ENCODE measurements at regions of chr10 and their contacts with region 1.

Region 1: GRCh38 chr10:46106410-46107255 is 60.6 kb upstream of the MSMB start:
- DNase-seq: peak; percentile 89
- H3K4me3 Mint-ChIP-seq: peak overlapping the region; percentile 82
- H3K27ac Mint-ChIP-seq: peak overlapping the region; percentile 4
- H3K4me1 Mint-ChIP-seq: peaks cover 14% of the 10 kb centered on the region
- H3K27me3 Mint-ChIP-seq: peaks cover 21% of the 10 kb centered on the region

Region 2: GRCh38 chr10:46033602-46034011 is 73.0 kb before region 1 on chr10:
- intact Hi-C with region 1: no loop called
- DNase-seq: no peak
- H3K4me3 Mint-ChIP-seq: no peak overlapping the region
- H3K27ac Mint-ChIP-seq: no peak overlapping the region
- H3K4me1 Mint-ChIP-seq: peaks cover 23% of the 10 kb centered on the region
- H3K27me3 Mint-ChIP-seq: peaks cover 1% of the 10 kb centered on the region

Region 3: GRCh38 chr10:46050941-46051623 is 55.6 kb before region 1 on chr10:
- intact Hi-C with region 1: no loop called
- DNase-seq: no peak
- H3K4me3 Mint-ChIP-seq: no peak overlapping the region
- H3K27ac Mint-ChIP-seq: no peak overlapping the region
- H3K4me1 Mint-ChIP-seq: peaks cover 4% of the 10 kb centered on the region
- H3K27me3 Mint-ChIP-seq: peaks cover 7% of the 10 kb centered on the region

Region 4: GRCh38 chr10:46216836-46217751 is 110.5 kb after region 1 on chr10:
- intact Hi-C with region 1: no loop called
- DNase-seq: peak; percentile 45
- H3K4me3 Mint-ChIP-seq: no peak overlapping the region
- H3K27ac Mint-ChIP-seq: no peak overlapping the region
- H3K4me1 Mint-ChIP-seq: peaks cover 14% of the 10 kb centered on the region
- H3K27me3 Mint-ChIP-seq: no peaks in the 10 kb centered on the region

Region 5: DNA sequence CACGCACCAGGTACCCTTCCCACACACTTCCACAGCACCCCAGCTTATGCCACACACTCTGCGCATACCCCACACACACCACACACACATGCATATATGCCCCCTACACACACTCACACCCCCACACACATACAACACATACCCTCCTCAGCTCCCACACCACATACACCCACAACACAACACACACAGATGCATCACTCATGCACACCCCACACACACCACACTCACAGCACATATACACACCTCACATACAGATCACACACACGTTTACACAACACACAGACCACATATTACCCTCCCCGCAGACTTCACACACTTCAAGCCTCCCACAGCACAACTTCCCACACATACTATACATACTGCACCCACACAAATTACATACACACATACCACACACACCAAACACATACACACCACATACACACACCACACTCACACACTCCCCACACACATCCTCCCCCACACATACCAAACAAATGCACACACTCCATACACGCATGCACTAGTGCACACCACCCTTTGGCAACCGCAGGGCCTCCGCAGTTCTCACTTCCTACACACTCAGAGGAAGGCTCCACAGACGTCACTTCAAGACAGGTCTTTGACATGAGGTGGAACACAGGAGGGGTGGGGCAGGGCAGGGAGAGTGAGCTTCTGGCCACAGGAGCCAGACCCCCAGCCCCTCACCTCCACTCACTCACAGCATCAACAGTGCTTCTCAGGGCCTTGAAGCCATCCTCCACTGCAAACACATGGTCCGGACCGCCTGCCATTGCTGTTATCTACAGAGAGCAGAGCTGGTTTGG is 161.6 kb after region 1 on chr10:
- intact Hi-C with region 1: loop called (anchors 5 kb)
- DNase-seq: peak; percentile 77
- H3K4me3 Mint-ChIP-seq: no peak overlapping the region
- H3K27ac Mint-ChIP-seq: no peak overlapping the region
- H3K4me1 Mint-ChIP-seq: peaks cover 31% of the 10 kb centered on the region
- H3K27me3 Mint-ChIP-seq: no peaks in the 10 kb centered on the region

Measured in activated CD4-positive, alpha-beta T cell treated with anti-CD3 and anti-CD28 coated beads, Interleukin-2, amount 10 ng/mL, durations not matched to agents 24 days and 14 days (primary cell).